MCF 10A (cell line): ENCODE measurements at regions of chr1 and their contacts with region 1.

Region 1: GRCh38 chr1:202274611-202275010 is 67.1 kb downstream of the UBE2T start:
- DNase-seq: peak; percentile 92
- H3K4me3 Mint-ChIP-seq: no peak overlapping the region
- H3K27ac Mint-ChIP-seq: no peak overlapping the region
- H3K4me1 Mint-ChIP-seq: peaks cover 3% of the 10 kb centered on the region
- H3K27me3 Mint-ChIP-seq: no peaks in the 10 kb centered on the region
- CTCF ChIP-seq: peak; percentile 88

Region 2: GRCh38 chr1:202121006-202121405 is 153.6 kb before region 1 on chr1:
- CTCF ChIA-PET with region 1: no interaction called
- POLR2A ChIA-PET with region 1: no interaction called
- intact Hi-C with region 1: no loop called
- DNase-seq: no peak
- H3K4me3 Mint-ChIP-seq: no peak overlapping the region
- H3K27ac Mint-ChIP-seq: no peak overlapping the region
- H3K4me1 Mint-ChIP-seq: no peaks in the 10 kb centered on the region
- H3K27me3 Mint-ChIP-seq: peaks cover 17% of the 10 kb centered on the region
- CTCF ChIP-seq: no peak

Region 3: DNA sequence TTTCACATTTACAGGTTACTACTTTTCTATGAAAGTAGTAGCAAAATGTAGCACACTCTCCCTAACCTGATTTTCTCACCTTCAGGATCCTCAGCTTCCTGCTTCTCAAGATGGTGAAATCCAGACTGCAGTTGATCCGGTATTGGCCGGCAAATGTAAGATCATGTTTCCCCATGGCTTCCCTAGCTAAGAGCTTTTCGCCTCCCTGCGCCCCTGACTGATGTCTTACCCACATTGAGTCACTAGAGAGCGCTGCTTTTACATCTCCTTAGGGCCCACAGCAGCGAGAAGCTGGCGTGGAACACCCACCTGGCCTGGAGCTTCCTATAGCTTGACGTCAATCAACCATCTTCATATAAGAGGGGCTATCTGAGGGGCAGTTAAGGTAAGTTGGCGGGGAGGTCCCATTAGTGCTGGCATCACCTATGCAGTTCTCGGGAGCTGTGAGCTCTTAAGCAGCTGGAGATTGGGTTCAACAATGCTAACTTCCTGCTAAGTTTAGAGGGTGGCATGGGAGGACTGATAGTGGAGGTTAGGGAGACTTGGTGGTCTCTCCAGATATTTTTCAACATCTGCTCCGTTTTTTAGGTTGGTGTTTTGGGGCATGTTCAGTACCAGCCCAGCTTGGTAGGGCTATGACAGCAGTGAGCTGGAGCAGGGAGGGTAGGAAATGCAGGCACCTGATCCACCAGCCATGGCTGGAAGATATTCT is 119.7 kb before region 1 on chr1:
- CTCF ChIA-PET with region 1: no interaction called
- POLR2A ChIA-PET with region 1: no interaction called
- intact Hi-C with region 1: no loop called
- DNase-seq: peak; percentile 92
- H3K4me3 Mint-ChIP-seq: no peak overlapping the region
- H3K27ac Mint-ChIP-seq: no peak overlapping the region
- H3K4me1 Mint-ChIP-seq: peaks cover 12% of the 10 kb centered on the region
- H3K27me3 Mint-ChIP-seq: no peaks in the 10 kb centered on the region
- CTCF ChIP-seq: peak; percentile 58

Region 4: GRCh38 chr1:202264300-202264699 is 10.3 kb before region 1 on chr1:
- CTCF ChIA-PET with region 1: interaction called, 20 read pairs
- POLR2A ChIA-PET with region 1: interaction called, 10 read pairs
- intact Hi-C with region 1: no loop called
- DNase-seq: no peak
- H3K4me3 Mint-ChIP-seq: no peak overlapping the region
- H3K27ac Mint-ChIP-seq: no peak overlapping the region
- H3K4me1 Mint-ChIP-seq: no peaks in the 10 kb centered on the region
- H3K27me3 Mint-ChIP-seq: peaks cover 57% of the 10 kb centered on the region
- CTCF ChIP-seq: no peak